Activated naive CD8-positive, alpha-beta T cell treated with anti-CD3 and anti-CD28 coated beads, Interleukin-2, amount 10 ng/mL, durations not matched to agents 7 days and 5 days (primary cell): ENCODE measurements at regions of chr7 and their contacts with region 1.

Region 1: DNA sequence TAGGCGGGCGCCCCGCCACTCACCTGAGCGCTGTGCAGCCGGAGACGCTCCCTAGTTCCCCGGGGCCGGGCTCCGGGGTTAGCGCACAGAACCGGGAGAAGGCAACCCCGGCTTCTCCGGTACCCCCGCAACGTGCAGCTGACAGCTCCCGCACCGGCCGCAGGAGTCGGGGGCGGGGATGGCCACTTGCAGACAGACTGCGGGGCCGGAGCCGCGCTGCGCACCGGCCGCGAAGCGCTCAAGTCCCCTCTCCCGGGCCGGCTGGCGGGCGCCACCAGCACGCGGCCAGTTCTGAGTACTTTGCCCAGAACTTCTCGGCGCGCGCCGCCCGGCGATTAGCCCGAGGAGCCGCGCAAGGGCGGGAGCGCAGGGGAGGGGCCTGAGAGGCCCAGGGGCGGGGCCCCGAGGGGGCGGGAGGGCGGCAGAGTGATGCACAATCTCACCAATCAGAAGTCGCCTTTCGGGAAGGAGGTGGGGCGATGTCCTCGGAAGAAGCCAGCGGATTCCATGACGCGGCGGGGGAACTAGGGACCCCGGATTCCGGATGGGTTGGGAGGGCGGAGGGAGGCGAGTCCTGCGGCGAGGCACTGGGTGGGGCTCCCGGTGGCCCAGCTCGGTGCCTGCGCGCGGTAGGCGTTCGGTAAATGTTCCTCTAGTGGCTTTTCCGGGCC is at the start of gene OSBPL3:
- DNase-seq: peak; percentile 98
- ATAC-seq: peak; percentile 72
- H3K4me3 Mint-ChIP-seq: peak within 1 kb of the TSS; percentile 86
- H3K27ac Mint-ChIP-seq: peak within 1 kb of the TSS; percentile 87
- H3K4me1 Mint-ChIP-seq: peaks cover 42% of the 10 kb centered on the region
- H3K27me3 Mint-ChIP-seq: peaks cover 3% of the 10 kb centered on the region
- total RNA-seq, gene OSBPL3: 47.8 to 60.1 TPM

Region 2: GRCh38 chr7:24819916-24820689 is 159.9 kb before region 1 on chr7:
- POLR2A ChIA-PET with region 1: interaction called, 50 read pairs
- DNase-seq: peak; percentile 67
- ATAC-seq: peak; percentile 37
- H3K4me3 Mint-ChIP-seq: peak overlapping the region; percentile 89
- H3K27ac Mint-ChIP-seq: peak overlapping the region; percentile 99
- H3K4me1 Mint-ChIP-seq: peaks cover 34% of the 10 kb centered on the region
- H3K27me3 Mint-ChIP-seq: no peaks in the 10 kb centered on the region

Region 3: DNA sequence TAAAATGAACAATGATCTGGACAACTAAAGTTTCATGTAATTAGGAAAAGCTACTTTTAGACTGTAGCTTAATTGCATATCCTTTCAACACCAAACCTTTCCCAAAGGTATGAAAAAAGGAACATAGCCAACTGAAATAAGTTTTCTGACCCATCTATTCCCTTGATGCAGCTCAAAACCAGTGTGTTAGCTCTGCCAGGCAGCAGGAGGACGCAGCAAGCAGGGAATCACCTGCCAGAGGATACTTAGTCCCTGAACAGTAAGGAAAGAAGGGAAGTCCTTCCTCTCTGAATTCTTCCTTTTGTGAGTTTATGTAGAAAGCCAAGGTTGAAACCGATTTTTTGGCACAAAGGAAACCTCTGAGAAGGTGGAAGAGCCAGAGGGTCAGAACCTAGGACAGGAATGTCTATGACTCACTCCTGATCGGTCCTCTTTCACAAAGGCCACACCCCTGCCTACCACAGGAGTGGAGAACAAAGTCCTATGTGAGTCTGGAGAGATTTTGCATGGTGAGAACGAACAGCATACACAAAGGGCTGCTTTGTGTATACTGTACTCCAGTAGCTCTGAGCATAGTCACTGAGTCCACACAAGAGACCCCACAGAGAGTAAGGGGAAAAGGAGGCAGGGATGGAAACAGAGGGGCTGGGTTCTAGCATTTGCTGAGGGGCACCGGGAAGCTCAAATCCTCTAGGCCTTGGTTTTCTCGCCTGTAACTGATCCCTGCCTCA is 153.9 kb before region 1 on chr7:
- POLR2A ChIA-PET with region 1: interaction called, 50 read pairs
- DNase-seq: peak; percentile 41
- ATAC-seq: peak; percentile 20
- H3K4me3 Mint-ChIP-seq: peak overlapping the region; percentile 70
- H3K27ac Mint-ChIP-seq: peak overlapping the region; percentile 90
- H3K4me1 Mint-ChIP-seq: peaks cover 69% of the 10 kb centered on the region
- H3K27me3 Mint-ChIP-seq: no peaks in the 10 kb centered on the region

Region 4: DNA sequence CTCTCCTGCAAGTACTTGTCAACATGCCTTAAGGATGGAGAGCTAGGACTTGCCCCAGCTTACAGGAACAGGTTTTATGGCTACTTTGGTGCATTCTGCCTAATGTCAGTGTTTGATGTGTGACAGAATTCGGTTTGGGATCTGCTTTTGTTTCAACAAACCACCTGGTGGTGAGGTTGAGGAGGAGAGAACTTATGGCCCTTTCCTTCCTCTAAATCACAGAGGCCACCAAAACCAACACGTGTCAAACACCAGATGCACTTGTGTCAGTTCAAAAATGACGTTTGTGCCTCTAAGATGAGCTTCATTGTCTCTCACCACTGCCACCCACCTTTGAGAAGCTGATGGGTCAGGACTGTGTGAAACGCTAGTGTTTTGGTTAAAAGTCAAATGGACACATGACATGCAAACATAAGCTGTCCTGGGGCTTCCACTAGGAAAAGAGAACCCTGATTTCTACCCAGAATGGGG is 83.9 kb before region 1 on chr7:
- POLR2A ChIA-PET with region 1: interaction called, 12 read pairs
- DNase-seq: no peak
- ATAC-seq: peak; percentile 65
- H3K4me3 Mint-ChIP-seq: peak overlapping the region; percentile 18
- H3K27ac Mint-ChIP-seq: peak overlapping the region; percentile 5
- H3K4me1 Mint-ChIP-seq: peaks cover 48% of the 10 kb centered on the region
- H3K27me3 Mint-ChIP-seq: no peaks in the 10 kb centered on the region

Region 5: GRCh38 chr7:24911213-24911603 is 68.8 kb before region 1 on chr7:
- POLR2A ChIA-PET with region 1: interaction called, 34 read pairs
- DNase-seq: no peak
- ATAC-seq: peak; percentile 67
- H3K4me3 Mint-ChIP-seq: peak overlapping the region; percentile 79
- H3K27ac Mint-ChIP-seq: peak overlapping the region; percentile 99
- H3K4me1 Mint-ChIP-seq: peaks cover 53% of the 10 kb centered on the region
- H3K27me3 Mint-ChIP-seq: no peaks in the 10 kb centered on the region

Region 6: GRCh38 chr7:24922099-24922773 is 57.8 kb before region 1 on chr7:
- POLR2A ChIA-PET with region 1: interaction called, 12 read pairs
- DNase-seq: no peak
- ATAC-seq: no peak
- H3K4me3 Mint-ChIP-seq: peak overlapping the region; percentile 32
- H3K27ac Mint-ChIP-seq: peak overlapping the region; percentile 95
- H3K4me1 Mint-ChIP-seq: peaks cover 75% of the 10 kb centered on the region
- H3K27me3 Mint-ChIP-seq: no peaks in the 10 kb centered on the region

Region 7: GRCh38 chr7:24939416-24939815 is 40.6 kb before region 1 on chr7:
- POLR2A ChIA-PET with region 1: no interaction called
- DNase-seq: no peak
- ATAC-seq: no peak
- H3K4me3 Mint-ChIP-seq: no peak overlapping the region
- H3K27ac Mint-ChIP-seq: no peak overlapping the region
- H3K4me1 Mint-ChIP-seq: peaks cover 30% of the 10 kb centered on the region
- H3K27me3 Mint-ChIP-seq: no peaks in the 10 kb centered on the region

Region 8: DNA sequence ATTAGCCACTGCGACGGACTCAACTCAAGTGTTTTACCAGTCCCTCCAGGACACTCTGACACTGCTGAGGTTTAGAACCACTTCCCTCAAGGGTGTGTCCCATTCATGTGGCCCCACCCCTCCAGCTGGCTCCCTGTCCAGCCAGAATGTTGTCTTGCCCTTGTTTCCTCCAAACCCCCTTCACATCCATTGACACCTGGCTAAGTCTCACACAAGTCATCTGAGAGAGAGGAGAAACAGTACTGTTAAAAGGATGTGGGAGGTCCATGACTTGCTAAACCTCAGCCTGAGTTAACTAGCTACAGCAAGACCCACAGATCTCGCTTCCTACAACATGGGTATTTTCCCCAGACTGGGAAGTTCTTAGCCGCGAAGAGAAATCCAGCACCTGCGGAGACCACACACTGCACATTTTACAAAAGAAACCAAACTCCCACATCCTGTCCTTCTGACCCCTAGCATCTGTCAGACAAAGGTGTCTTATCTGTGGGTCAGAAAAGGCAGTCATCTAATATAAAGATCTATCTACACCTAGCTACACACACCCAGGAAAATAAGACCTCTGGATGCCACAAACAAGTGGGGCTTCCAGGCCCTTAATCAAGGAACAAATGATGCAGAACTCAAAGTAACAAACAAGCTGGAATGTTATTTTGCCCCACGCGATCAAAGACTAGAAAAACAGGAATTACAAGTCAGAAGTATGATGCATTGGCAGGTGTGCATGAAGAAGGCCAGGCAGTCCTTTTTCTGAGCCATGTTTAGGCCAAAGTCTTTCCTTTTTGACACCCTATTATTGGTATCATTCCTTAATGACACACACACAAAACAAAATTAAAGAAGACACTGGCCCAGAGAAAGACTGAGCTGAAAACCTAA is 13.9 kb before region 1 on chr7:
- POLR2A ChIA-PET with region 1: interaction called, 17 read pairs
- DNase-seq: peak; percentile 44
- ATAC-seq: peak; percentile 87
- H3K4me3 Mint-ChIP-seq: peak overlapping the region; percentile 48
- H3K27ac Mint-ChIP-seq: peak overlapping the region; percentile 36
- H3K4me1 Mint-ChIP-seq: peaks cover 52% of the 10 kb centered on the region
- H3K27me3 Mint-ChIP-seq: no peaks in the 10 kb centered on the region

Region 9: DNA sequence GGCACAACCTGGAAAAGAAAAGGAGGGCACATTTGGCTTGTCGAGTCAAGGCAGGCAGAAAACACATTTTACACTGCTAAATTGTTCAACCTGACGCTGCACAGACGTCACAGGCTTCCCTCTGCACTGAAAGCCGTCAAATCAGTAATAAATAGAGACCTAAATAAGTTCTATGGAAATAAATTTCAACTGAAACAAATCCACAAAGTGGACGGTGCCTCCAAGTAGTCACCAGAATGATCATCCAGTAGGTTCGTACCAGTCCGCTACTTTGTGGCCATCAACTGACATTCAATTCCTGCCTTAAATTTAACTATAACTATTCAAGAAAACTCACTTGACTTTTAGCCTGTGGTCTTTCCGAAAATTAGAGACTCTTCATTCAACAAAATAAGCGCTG is 199.3 kb after region 1 on chr7:
- POLR2A ChIA-PET with region 1: no interaction called
- DNase-seq: no peak
- ATAC-seq: no peak
- H3K4me3 Mint-ChIP-seq: peak overlapping the region; percentile 84
- H3K27ac Mint-ChIP-seq: peak overlapping the region; percentile 92
- H3K4me1 Mint-ChIP-seq: peaks cover 14% of the 10 kb centered on the region
- H3K27me3 Mint-ChIP-seq: peaks cover 1% of the 10 kb centered on the region